SK-N-SH (cell line): ENCODE measurements at regions of chr9 and their contacts with region 1.

Region 1: DNA sequence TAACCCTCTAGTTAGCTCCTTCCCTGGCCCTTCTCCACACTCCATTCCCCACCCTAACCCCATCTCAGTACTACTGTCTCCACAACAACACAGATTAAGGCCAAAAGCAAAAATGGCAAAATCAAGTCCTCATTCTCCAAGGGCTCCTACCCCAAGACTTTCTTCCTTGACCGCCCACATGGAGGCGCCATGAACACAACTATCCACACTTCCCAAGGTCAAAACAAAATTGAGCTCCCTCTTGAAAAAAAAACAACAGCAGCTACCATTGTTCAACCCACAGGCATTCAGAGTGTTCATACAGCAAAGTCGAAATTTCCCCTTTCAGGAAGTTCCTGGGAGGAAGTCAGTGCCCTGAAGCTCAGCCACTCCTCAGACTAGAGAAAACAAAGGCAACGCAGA is 54.4 kb downstream of the GNAQ start:
- DNase-seq: peak; percentile 25
- H3K4me3 ChIP-seq: peak overlapping the region in 1 of 2 experiments; percentile 20; a peak in 1 of 4 replicates
- H3K27ac ChIP-seq: peak overlapping the region; percentile 5 to 42; a peak in 2 of 4 replicates
- H3K4me1 ChIP-seq: peaks cover 10 to 41% of the 10 kb centered on the region in 2 experiments; a peak in 3 of 4 replicates
- H3K27me3 ChIP-seq: no peaks in the 10 kb centered on the region
- CTCF ChIP-seq: peak; percentile 76
- EP300 ChIP-seq: no peak
- RAD21 ChIP-seq: peak; percentile 77

Region 2: DNA sequence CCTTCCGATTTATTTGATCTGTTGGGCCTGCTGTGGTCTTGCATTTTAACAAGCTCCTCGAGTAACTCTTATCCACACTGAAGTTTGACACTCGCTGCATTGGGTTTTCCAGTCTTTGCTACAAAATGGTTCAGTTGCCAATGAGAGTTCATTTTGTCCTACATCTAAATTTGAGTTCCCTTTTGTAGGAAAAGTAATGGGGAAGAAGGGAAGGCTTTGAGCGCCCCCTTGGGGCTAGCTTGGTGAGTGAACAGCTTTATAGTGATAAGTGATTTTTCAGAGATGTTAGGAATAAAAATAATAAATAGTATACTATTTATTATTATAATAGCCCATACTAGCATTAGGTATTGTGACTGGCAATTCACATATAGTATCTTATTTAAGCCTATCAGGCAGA is 144.3 kb after region 1 on chr9:
- CTCF ChIA-PET with region 1: interaction called, 13 read pairs
- POLR2A ChIA-PET with region 1: no interaction called
- DNase-seq: peak; percentile 39
- H3K4me3 ChIP-seq: no peak overlapping the region
- H3K27ac ChIP-seq: no peak overlapping the region
- H3K4me1 ChIP-seq: no peaks in the 10 kb centered on the region; a peak in 1 of 4 replicates
- H3K27me3 ChIP-seq: no peaks in the 10 kb centered on the region
- CTCF ChIP-seq: peak; percentile 74
- EP300 ChIP-seq: no peak
- RAD21 ChIP-seq: peak; percentile 89